Mammary epithelial cell (primary cell): ENCODE measurements at regions of chr9 and their contacts with region 1.

Region 1: GRCh38 chr9:3028535-3028934 is 184.6 kb upstream of the PUM3 start:
- DNase-seq: no peak
- H3K4me3 ChIP-seq: no peak overlapping the region
- H3K27ac ChIP-seq: no peak overlapping the region
- H3K4me1 ChIP-seq: no peaks in the 10 kb centered on the region
- H3K27me3 ChIP-seq: no peaks in the 10 kb centered on the region
- CTCF ChIP-seq: no peak

Region 2: DNA sequence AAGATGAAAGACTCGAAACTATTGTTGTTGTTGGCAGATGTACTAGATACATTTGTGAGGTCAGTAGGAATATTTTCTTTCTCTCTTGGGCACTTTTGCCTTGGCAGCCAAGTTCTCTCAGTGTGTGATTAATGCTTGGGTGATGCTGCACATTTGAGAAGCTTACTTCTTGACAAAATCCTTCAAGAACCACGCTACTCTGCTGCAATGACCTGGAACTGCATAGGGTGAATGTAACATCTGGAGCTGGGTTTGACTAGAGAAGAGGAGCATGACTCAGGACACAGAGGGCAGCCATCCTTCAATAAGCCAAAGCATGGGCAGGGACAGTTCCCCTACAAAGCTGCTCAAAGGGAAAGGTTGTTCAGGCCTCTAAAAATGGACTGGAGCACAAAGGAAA is 109.2 kb before region 1 on chr9:
- CTCF ChIA-PET with region 1: no interaction called
- dilution Hi-C with region 1: loop called (anchors 10 kb)
- in situ Hi-C with region 1: no loop called
- intact Hi-C with region 1: no loop called
- DNase-seq: no peak
- H3K4me3 ChIP-seq: no peak overlapping the region
- H3K27ac ChIP-seq: no peak overlapping the region
- H3K4me1 ChIP-seq: no peaks in the 10 kb centered on the region
- H3K27me3 ChIP-seq: peaks cover 2% of the 10 kb centered on the region
- CTCF ChIP-seq: no peak

Region 3: DNA sequence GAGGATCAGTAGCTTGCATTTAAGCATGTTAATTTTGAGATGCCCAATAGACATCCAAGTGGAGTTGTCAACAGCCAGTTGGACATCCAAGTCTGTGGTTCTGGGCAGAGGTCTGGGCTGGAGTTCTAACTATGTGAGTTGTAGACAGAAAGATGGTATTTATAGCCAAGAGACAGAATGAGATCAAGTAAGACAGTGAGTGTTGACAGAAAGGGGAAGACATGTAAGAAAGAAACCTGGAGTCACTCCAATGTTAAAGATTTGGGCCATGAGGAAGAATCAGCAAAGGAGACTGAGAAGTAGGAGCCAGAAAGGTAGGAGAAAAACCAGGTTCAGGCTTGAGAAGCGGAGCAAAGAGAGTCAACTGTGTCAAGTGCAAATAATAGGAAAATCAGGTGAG is 89.2 kb before region 1 on chr9:
- CTCF ChIA-PET with region 1: no interaction called
- dilution Hi-C with region 1: no loop called
- in situ Hi-C with region 1: no loop called
- intact Hi-C with region 1: no loop called
- DNase-seq: no peak
- H3K4me3 ChIP-seq: no peak overlapping the region
- H3K27ac ChIP-seq: no peak overlapping the region
- H3K4me1 ChIP-seq: no peaks in the 10 kb centered on the region
- H3K27me3 ChIP-seq: no peaks in the 10 kb centered on the region
- CTCF ChIP-seq: no peak

Region 4: DNA sequence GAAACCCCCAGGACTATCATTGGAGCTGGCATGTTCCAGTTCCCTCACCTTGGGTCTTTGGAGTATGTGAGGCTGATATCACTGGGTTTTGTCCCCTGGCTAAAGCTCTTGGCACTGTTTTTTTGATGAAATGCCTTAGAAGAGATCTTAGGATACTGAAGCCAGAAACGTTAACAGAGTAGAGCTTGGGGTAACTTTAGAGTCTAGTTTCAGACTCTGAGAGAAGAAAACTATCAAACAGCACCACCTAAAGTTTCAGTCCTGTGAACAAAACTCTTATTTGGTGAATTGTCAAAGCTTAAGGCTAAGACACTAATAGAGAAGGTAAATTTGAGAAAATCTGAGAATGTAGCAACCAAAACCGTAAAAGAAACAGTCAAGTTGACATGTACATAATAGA is 73.0 kb before region 1 on chr9:
- CTCF ChIA-PET with region 1: no interaction called
- dilution Hi-C with region 1: loop called (anchors 5 kb)
- in situ Hi-C with region 1: no loop called
- intact Hi-C with region 1: no loop called
- DNase-seq: no peak
- H3K4me3 ChIP-seq: no peak overlapping the region
- H3K27ac ChIP-seq: no peak overlapping the region
- H3K4me1 ChIP-seq: no peaks in the 10 kb centered on the region
- H3K27me3 ChIP-seq: no peaks in the 10 kb centered on the region
- CTCF ChIP-seq: no peak

Region 5: DNA sequence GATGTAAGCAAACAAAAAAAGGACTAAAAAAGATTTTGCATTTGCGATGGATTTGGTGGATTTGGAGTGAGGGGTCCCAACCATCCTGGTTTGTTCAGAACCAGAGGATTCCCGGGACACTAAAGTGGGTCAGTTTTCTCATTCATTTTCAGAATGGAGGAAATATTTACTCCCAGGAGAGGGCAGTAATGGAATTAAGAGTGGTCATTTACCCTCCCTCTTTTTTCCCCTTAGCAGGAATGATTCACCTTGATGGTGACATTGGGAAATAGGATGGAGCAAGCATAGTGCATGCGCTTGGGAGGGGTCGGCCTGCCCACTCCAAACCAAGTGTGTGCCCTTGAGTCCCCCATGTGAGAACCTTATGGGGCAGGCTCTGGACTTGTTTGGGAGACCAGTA is 20.4 kb before region 1 on chr9:
- CTCF ChIA-PET with region 1: no interaction called
- dilution Hi-C with region 1: no loop called
- in situ Hi-C with region 1: no loop called
- intact Hi-C with region 1: no loop called
- DNase-seq: no peak
- H3K4me3 ChIP-seq: no peak overlapping the region
- H3K27ac ChIP-seq: no peak overlapping the region
- H3K4me1 ChIP-seq: no peaks in the 10 kb centered on the region
- H3K27me3 ChIP-seq: no peaks in the 10 kb centered on the region
- CTCF ChIP-seq: no peak

Region 6: DNA sequence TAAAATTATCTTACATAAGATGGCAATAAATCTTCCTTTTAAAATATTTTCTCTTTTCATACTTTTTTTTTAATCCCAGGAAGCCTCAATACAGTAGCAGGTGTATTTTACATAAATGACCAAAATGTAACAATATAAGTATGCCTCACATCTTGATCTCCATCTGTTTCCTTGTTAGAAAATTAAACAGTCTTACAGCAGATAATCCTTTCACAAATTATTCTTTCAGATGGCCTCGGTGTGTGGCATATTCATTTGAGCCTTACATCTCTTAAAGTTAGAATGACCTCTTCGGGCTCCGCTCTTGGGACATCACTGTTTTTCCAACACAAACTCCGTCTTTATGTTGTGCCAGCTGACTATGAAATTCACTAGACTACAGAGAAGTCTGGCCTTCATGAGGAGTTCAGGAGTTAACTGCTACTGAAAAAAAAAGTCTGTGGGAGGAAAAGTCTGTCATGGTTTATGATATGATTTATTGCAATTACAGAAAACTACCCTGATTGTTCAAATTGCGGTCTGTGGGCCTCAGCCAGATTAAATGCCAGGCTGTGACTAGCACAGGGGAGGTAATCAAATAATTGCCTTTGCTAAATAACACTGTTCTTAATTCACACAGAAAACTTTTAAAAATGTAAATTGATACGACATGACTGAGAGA is 108.3 kb after region 1 on chr9:
- CTCF ChIA-PET with region 1: no interaction called
- dilution Hi-C with region 1: loop called (anchors 5 kb)
- in situ Hi-C with region 1: no loop called
- intact Hi-C with region 1: no loop called
- DNase-seq: peak; percentile 2
- H3K4me3 ChIP-seq: no peak overlapping the region
- H3K27ac ChIP-seq: no peak overlapping the region
- H3K4me1 ChIP-seq: no peaks in the 10 kb centered on the region
- H3K27me3 ChIP-seq: no peaks in the 10 kb centered on the region
- CTCF ChIP-seq: no peak

Region 7: GRCh38 chr9:3525836-3526164 is 497.3 kb after region 1 on chr9 and contains the start of gene RFX3:
- CTCF ChIA-PET with region 1: no interaction called
- dilution Hi-C with region 1: no loop called
- in situ Hi-C with region 1: no loop called
- intact Hi-C with region 1: no loop called
- DNase-seq: peak; percentile 94
- H3K4me3 ChIP-seq: peak within 1 kb of the TSS; percentile 92 to 100 (median 98)
- H3K27ac ChIP-seq: peak within 1 kb of the TSS; percentile 99
- H3K4me1 ChIP-seq: peaks cover 8% of the 10 kb centered on the region
- H3K27me3 ChIP-seq: no peaks in the 10 kb centered on the region
- CTCF ChIP-seq: no peak
- total RNA-seq, gene RFX3: 2.3 to 7.9 TPM